Breast epithelium (tissue), 4 donors: ENCODE measurements at regions of chr2 and their contacts with region 1.

Region 1: DNA sequence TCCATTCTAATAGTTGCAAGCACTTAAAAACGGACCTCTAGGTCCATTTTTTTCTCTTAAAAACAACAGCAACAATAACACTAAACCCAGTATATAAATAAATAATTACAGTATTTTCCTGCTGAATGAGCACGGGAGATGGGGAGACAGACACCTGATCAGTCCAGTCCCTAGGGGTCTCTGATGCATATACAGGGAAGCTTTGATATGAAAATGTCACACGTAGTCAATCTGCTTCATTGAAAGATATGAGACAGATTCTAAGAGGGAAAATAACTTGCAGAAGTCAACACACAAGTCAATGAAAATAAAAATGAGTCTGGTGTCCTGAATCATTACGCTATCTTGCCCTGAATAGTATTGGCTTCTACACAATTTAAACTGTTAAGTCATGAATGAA is 523.3 kb upstream of the SLC8A1 start:
- DNase-seq: no peak
- H3K4me3 ChIP-seq: no peak overlapping the region
- H3K27ac ChIP-seq: no peak overlapping the region
- H3K4me1 ChIP-seq: no peaks in the 10 kb centered on the region
- H3K27me3 ChIP-seq: no peaks in the 10 kb centered on the region
- CTCF ChIP-seq: no peak
- POLR2A ChIP-seq: no peak

Region 2: DNA sequence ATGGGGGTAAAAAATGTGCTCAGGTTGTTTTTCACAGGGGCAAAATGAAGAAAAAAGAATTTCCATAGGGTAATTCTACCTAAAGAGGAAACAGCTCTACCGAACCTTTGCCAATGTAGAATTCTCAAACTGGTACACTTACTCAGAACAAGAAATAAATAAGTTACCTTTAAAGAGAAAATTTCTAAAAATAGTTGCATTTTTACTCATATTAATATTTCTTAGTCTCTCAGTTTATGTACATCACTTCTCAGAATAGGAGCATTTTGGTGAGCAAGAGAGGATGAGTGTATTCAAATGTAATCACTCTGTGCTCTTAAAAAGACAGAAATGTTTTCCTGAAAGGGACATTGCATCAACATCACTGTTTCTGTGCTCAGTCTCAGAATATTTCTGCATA is 51.5 kb after region 1 on chr2:
- intact Hi-C with region 1: loop called (anchors 2 kb)
- DNase-seq: no peak
- H3K4me3 ChIP-seq: no peak overlapping the region
- H3K27ac ChIP-seq: no peak overlapping the region
- H3K4me1 ChIP-seq: no peaks in the 10 kb centered on the region
- H3K27me3 ChIP-seq: no peaks in the 10 kb centered on the region
- CTCF ChIP-seq: no peak
- POLR2A ChIP-seq: no peak